CD4-positive, alpha-beta memory T cell (primary cell): ENCODE measurements at regions of chr7 and their contacts with region 1.

Region 1: DNA sequence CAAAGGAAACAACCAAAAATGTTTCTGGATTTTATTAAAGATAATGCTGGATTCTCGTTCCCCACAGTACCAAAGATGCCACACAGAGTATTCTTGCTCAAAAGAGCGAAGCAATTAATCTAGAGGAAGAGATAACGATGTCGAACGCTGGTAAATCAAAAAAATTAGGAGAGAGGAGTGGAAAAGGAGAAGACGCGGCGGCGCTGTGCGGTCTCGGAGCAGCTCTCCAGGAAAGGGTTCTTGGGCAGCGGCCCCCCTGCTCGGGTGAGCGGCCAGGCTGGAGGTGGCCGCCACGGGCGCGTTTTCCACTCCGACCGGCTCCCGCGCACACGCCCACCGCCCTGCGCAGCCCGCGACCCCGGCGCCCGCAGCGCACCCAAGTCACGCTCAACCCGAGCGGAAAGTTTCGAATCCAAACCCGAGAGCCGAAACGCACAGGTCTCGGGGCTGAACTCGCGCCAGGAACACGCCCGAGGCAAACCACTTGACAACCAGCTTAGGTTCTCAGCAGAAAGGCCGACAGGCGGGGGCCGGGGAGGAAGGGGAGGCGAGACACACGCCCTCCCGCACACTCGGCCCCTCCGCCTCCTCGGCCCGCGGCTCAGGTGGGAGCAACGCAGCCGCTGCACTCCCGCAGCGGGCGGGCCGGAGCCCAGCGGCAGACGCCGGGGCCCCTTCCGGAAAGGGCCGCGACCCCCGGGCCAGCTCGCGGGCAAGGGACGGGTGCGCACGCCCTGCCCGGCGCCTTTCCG is 924 bp downstream of the SRPK2 start:
- DNase-seq: peak; percentile 42 to 66 (median 47)
- H3K4me3 ChIP-seq: peak overlapping the region; percentile 57 to 61
- H3K4me3 Mint-ChIP-seq: peak overlapping the region; percentile 90 to 95 (median 92)
- H3K27ac ChIP-seq: peak overlapping the region; percentile 52
- H3K27ac Mint-ChIP-seq: peak overlapping the region; percentile 57 to 95 (median 82)
- H3K4me1 ChIP-seq: peaks cover 32% of the 10 kb centered on the region
- H3K4me1 Mint-ChIP-seq: peaks cover 32 to 56% (median 40%) of the 10 kb centered on the region in 4 donors
- H3K27me3 ChIP-seq: no peaks in the 10 kb centered on the region
- H3K27me3 Mint-ChIP-seq: no peaks in the 10 kb centered on the region

Region 2: DNA sequence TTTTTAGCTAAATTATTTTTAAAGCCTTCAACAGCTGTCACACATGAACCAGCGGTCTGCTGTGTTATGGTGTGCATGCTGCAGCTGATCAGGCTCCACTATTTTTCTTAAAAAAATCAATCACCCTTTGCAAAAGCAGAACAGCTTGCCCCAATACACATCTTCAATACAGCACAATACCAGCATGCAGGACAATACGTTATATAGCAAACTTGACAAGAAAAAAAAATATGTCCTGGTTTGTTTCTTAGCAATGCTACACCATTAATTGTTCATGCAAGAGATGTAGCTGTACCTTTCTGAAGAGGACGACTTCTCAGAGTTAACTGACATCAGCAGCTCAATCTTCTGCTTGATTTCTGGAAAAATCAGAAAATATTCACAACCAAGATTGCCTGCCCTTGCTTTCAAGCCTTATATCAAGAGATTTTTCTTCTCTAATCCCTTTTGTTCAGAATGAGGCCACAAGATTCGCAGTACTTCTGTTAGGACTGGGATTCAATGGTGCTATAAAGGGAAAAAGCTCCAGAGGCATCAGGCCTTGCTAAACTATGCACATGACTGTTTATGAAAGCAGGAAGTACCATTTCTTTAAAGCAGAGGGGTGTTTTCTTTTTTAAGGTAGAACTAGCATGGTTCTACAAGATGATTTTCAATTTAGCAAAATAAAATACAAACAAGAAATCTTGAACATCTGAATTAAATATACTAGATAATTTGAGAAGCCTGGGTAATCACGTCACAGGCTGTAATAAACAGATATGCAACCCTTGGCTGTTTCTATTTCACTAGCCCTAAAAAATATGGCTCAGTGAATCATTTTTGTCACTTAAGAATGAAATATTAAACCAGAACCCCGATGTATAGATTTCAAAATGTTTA is 119.0 kb before region 1 on chr7:
- CTCF ChIA-PET with region 1: no interaction called
- POLR2A ChIA-PET with region 1: interaction called, 3 read pairs
- intact Hi-C with region 1: loop called (anchors 5 kb)
- DNase-seq: peak in 4 of 5 donors; percentile 36 to 50 (median 42)
- H3K4me3 ChIP-seq: peak overlapping the region; percentile 52 to 70
- H3K4me3 Mint-ChIP-seq: peak overlapping the region; percentile 82 to 97 (median 90)
- H3K27ac ChIP-seq: peak overlapping the region; percentile 64
- H3K27ac Mint-ChIP-seq: peak overlapping the region; percentile 87 to 93 (median 91)
- H3K4me1 ChIP-seq: peaks cover 54% of the 10 kb centered on the region
- H3K4me1 Mint-ChIP-seq: peaks cover 42 to 72% (median 61%) of the 10 kb centered on the region in 4 donors
- H3K27me3 ChIP-seq: no peaks in the 10 kb centered on the region
- H3K27me3 Mint-ChIP-seq: no peaks in the 10 kb centered on the region

Region 3: DNA sequence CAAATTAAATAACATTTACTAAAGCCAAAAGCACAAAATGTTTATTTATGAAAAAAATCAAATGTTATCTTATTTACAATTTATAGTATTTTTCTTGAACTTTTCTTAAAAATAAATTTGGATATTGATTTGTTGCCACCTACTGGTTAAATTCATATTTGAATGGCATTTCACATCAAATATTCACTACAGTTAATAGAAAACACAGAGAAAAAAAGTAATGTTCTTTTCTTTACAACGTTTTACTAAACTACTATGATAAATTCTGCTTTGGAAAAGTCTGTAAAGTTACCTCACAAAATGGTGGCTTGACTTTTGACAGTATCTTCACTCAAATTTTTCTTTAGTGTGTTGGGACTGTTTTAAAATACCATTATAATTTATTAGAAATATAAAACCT is 51.8 kb before region 1 on chr7:
- CTCF ChIA-PET with region 1: no interaction called
- POLR2A ChIA-PET with region 1: interaction called, 9 read pairs
- intact Hi-C with region 1: loop called (anchors 10 kb)
- DNase-seq: peak in 3 of 5 donors; percentile 17 to 34 (median 22)
- H3K4me3 ChIP-seq: no peak overlapping the region
- H3K4me3 Mint-ChIP-seq: no peak overlapping the region
- H3K27ac ChIP-seq: no peak overlapping the region
- H3K27ac Mint-ChIP-seq: no peak overlapping the region
- H3K4me1 ChIP-seq: peaks cover 13% of the 10 kb centered on the region
- H3K4me1 Mint-ChIP-seq: peaks cover 19 to 31% (median 26%) of the 10 kb centered on the region in 4 donors
- H3K27me3 ChIP-seq: no peaks in the 10 kb centered on the region
- H3K27me3 Mint-ChIP-seq: no peaks in the 10 kb centered on the region

Region 4: GRCh38 chr7:105346593-105347322 is 41.0 kb before region 1 on chr7:
- CTCF ChIA-PET with region 1: interaction called, 8 read pairs
- POLR2A ChIA-PET with region 1: interaction called, 48 read pairs
- intact Hi-C with region 1: no loop called
- DNase-seq: peak in 4 of 5 donors; percentile 56 to 67 (median 60)
- H3K4me3 ChIP-seq: no peak overlapping the region
- H3K4me3 Mint-ChIP-seq: peak overlapping the region; percentile 34 to 78 (median 72)
- H3K27ac ChIP-seq: no peak overlapping the region
- H3K27ac Mint-ChIP-seq: peak overlapping the region; percentile 63 to 88 (median 79)
- H3K4me1 ChIP-seq: peaks cover 77% of the 10 kb centered on the region
- H3K4me1 Mint-ChIP-seq: peaks cover 40 to 70% (median 54%) of the 10 kb centered on the region in 4 donors
- H3K27me3 ChIP-seq: no peaks in the 10 kb centered on the region
- H3K27me3 Mint-ChIP-seq: no peaks in the 10 kb centered on the region

Region 5: DNA sequence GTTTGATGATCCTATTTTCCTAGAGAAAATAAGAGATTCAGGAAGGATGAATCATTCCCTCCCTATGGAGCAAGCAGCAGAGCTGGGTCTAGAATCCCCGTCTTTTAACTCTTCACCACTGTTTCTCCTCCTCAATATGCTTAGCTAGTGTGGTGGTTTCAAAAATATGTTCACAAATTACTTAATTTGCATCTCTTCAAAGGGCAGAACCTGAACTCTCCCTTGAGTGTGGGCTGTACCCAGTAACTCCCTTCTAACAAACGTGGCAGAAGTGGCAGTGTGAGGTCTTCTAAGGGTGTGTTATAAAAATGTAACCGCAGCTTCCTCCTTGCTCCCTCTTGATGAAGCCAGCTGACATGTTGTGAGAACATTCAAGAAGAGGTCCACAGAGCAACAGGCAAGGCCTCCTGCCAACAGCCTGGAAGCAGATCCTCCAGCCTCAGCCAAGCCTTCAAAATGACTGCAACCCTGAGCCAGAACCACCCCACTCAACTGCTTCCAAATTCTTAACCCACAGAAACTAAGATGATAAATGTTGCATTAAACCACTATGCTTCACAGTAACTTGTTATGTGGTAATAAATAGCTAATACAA is 35.7 kb before region 1 on chr7:
- CTCF ChIA-PET with region 1: interaction called, 8 read pairs
- POLR2A ChIA-PET with region 1: interaction called, 48 read pairs
- intact Hi-C with region 1: loop called (anchors 1 kb)
- DNase-seq: peak; percentile 81 to 87 (median 82)
- H3K4me3 ChIP-seq: no peak overlapping the region
- H3K4me3 Mint-ChIP-seq: peak overlapping the region; percentile 78 to 89 (median 84)
- H3K27ac ChIP-seq: peak overlapping the region; percentile 49
- H3K27ac Mint-ChIP-seq: peak overlapping the region; percentile 80 to 97 (median 96)
- H3K4me1 ChIP-seq: peaks cover 84% of the 10 kb centered on the region
- H3K4me1 Mint-ChIP-seq: peaks cover 47 to 74% (median 59%) of the 10 kb centered on the region in 4 donors
- H3K27me3 ChIP-seq: no peaks in the 10 kb centered on the region
- H3K27me3 Mint-ChIP-seq: no peaks in the 10 kb centered on the region

Region 6: GRCh38 chr7:105531792-105532671 is 144.2 kb after region 1 on chr7 and contains the start of gene RINT1:
- CTCF ChIA-PET with region 1: no interaction called
- POLR2A ChIA-PET with region 1: interaction called, 4 read pairs
- intact Hi-C with region 1: loop called (anchors 5 kb)
- DNase-seq: peak; percentile 86 to 88 (median 87)
- H3K4me3 ChIP-seq: peak within 1 kb of the TSS; percentile 93 to 94
- H3K4me3 Mint-ChIP-seq: peak within 1 kb of the TSS; percentile 85 to 98 (median 92)
- H3K27ac ChIP-seq: peak within 1 kb of the TSS; percentile 77
- H3K27ac Mint-ChIP-seq: peak within 1 kb of the TSS; percentile 73 to 98 (median 97)
- H3K4me1 ChIP-seq: peaks cover 23% of the 10 kb centered on the region
- H3K4me1 Mint-ChIP-seq: peaks cover 16 to 50% (median 30%) of the 10 kb centered on the region in 4 donors
- H3K27me3 ChIP-seq: no peaks in the 10 kb centered on the region
- H3K27me3 Mint-ChIP-seq: no peaks in the 10 kb centered on the region
- total RNA-seq, gene RINT1: 25.7 to 26.5 TPM